ENCODE measurements at regions of chr9 and their contacts with region 1.

Region 1: DNA sequence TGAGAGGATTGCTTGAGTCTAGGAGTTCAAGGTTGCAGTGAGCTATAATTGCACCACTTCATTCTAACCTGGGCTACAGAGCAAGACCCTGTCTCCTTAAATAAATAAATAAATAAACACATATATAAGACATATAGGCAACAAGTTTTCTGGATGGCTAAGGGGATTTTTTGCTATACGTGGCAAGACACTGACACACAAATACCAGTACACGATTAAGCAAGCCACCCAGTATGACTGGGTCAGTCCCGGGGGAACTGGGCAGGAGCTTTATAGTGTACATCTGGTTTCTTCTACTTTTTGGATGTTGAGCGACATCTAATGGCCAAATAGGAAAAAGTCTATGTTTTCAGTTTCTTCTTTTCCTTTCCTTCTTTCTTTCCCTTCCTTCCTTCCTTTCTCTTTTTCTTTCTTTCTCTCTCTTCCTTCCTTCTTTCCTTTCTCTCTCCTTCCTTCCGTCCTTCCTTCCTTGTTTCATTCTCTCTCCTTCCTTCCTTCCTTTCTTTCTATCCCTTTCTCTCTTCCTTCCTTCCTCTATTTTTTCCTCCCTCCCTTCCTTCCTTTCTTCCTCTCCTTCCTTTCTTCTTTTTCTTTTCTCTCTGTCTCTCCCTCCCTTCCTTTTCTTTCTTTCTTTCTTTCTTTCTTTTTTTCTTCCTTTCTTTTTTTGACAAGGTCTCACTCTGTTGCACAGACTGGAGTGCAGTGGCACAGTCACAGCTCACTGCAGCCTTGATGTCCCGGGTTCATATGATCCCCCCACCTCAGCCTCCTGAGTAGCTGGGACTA is 47.0 kb upstream of the PLIN2 start:
- DNase-seq: peak; percentile 66
- ATAC-seq: peak; percentile 92

Region 2: DNA sequence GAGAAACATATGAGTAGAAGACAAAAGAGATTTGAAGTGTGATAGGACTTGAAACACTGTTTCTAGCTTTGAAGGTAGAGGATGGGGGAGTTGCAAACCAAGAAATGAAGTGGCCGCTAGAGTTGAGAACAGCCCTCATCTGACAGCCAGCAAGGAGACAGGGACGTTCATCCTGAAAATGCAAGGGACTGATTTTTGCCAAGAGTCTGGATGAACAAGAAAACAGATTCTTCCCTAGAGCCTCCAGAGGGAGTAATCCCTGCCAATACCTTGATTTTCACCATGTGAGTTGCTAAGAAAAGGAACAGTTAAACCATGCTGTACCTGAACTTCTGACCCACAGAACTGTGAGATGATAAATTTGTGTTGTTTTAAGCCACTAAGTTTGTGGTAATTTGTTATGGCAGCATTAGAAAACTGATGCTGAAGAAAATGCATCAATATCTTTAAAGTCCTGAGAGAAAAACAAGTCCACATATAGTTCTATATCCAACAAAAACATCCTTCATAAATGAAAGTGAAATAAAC is 854.3 kb before region 1 on chr9:
- intact Hi-C with region 1: loop called (anchors 10 kb)
- DNase-seq: no peak
- ATAC-seq: peak; percentile 61

Region 3: GRCh38 chr9:19102631-19103345 is 71.5 kb before region 1 on chr9 and contains the start of gene HAUS6:
- intact Hi-C with region 1: loop called (anchors 10 kb)
- DNase-seq: peak; percentile 96
- ATAC-seq: peak; percentile 99
- total RNA-seq, gene HAUS6: 12.5 TPM

Region 4: GRCh38 chr9:19216466-19216865 is 42.1 kb after region 1 on chr9:
- intact Hi-C with region 1: no loop called
- DNase-seq: no peak
- ATAC-seq: no peak

Measured in sciatic nerve (tissue), 2 donors.